A673 (cell line): ENCODE measurements at regions of chr4 and their contacts with region 1.

Region 1: DNA sequence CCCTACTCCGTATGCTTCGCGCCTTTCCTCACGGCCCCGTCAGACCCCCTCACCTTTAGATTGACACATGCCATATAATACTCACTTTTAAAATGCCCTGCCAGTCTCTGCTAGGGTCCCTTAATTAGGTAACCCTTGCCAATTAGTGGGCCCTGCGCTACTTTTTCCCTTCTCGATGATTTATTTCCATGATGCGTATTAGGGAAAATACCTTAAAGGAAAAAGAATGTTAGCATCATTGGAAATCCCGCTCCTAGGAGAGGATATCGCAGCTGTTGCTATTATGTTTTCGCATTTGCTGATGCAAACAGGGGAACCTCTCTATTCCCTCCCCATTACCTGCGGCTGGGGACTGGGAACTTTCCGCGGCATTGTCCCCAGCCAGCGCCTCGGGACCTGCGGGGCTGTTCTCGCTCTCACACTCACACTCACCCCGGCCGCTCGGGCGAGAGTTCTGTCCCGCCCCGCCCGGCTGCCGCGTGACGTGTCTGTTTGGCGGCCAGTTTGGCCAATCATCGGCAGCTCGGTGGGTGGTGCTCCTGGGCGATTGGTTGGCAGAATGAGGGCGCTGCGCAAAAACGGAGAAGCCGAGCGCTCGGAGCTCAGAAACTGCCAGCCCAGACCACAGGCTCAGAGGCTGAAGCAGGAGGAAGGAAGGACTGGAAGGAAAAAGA is at the start of gene PCDH10:
- DNase-seq: peak; percentile 96
- H3K4me3 ChIP-seq: peak within 1 kb of the TSS; percentile 63
- H3K27ac ChIP-seq: peak within 1 kb of the TSS; percentile 4
- H3K4me1 ChIP-seq: peaks cover 4% of the 10 kb centered on the region
- H3K27me3 ChIP-seq: no peaks in the 10 kb centered on the region
- CTCF ChIP-seq: no peak
- total RNA-seq, gene PCDH10: 40.6 and 43.4 TPM in 2 replicates

Region 2: DNA sequence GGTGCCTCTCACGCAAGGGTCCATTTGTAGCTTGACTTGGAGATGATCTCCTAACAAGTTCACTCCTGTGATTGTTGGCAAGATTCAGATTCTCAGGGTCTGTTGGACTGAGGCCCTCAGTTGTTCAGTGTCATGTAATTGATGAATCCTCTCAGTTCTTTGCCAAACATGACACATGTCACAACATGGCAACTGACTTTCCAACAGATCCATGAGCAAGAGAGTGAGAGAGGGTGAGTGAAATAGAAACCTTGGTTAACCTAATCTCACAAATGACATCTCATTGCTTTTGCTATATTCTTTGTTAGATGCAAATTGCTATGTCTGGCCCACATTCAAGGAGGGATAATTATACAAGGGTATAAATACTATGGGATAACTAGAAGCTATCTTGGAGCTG is 230.7 kb before region 1 on chr4:
- CTCF ChIA-PET with region 1: no interaction called
- POLR2A ChIA-PET with region 1: no interaction called
- intact Hi-C with region 1: no loop called
- DNase-seq: no peak
- H3K4me3 ChIP-seq: no peak overlapping the region
- H3K27ac ChIP-seq: no peak overlapping the region
- H3K4me1 ChIP-seq: no peaks in the 10 kb centered on the region
- H3K27me3 ChIP-seq: no peaks in the 10 kb centered on the region
- CTCF ChIP-seq: no peak

Region 3: DNA sequence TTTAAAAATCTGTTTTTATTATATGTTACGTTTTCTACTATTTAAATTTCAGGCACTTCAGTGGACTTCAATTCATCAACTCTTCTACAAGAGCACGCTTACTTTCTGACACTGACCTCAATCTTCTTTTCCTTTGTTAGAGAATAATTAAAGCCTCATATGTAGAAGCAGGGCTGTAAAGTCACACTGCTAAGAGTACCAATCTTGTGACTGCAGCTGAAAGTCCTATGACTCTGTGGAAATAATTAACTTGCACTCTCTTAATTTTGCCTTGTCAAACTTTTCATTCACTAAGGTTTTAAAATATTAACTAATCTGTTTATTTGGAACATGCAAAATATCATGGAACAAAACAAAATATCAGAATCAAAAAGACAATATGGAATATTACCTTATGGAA is 498.4 kb after region 1 on chr4:
- CTCF ChIA-PET with region 1: no interaction called
- POLR2A ChIA-PET with region 1: no interaction called
- intact Hi-C with region 1: no loop called
- DNase-seq: no peak
- H3K4me3 ChIP-seq: no peak overlapping the region
- H3K27ac ChIP-seq: no peak overlapping the region
- H3K4me1 ChIP-seq: peaks cover 3% of the 10 kb centered on the region
- H3K27me3 ChIP-seq: no peaks in the 10 kb centered on the region
- CTCF ChIP-seq: no peak

Region 4: GRCh38 chr4:134934041-134934808 is 1785.4 kb after region 1 on chr4:
- CTCF ChIA-PET with region 1: no interaction called
- POLR2A ChIA-PET with region 1: no interaction called
- intact Hi-C with region 1: loop called (anchors 5 kb)
- DNase-seq: no peak
- H3K4me3 ChIP-seq: no peak overlapping the region
- H3K27ac ChIP-seq: no peak overlapping the region
- H3K4me1 ChIP-seq: no peaks in the 10 kb centered on the region
- H3K27me3 ChIP-seq: no peaks in the 10 kb centered on the region
- CTCF ChIP-seq: no peak